Esophagus squamous epithelium (tissue), 5 donors: ENCODE measurements at regions of chr14 and their contacts with region 1.

Region 1: DNA sequence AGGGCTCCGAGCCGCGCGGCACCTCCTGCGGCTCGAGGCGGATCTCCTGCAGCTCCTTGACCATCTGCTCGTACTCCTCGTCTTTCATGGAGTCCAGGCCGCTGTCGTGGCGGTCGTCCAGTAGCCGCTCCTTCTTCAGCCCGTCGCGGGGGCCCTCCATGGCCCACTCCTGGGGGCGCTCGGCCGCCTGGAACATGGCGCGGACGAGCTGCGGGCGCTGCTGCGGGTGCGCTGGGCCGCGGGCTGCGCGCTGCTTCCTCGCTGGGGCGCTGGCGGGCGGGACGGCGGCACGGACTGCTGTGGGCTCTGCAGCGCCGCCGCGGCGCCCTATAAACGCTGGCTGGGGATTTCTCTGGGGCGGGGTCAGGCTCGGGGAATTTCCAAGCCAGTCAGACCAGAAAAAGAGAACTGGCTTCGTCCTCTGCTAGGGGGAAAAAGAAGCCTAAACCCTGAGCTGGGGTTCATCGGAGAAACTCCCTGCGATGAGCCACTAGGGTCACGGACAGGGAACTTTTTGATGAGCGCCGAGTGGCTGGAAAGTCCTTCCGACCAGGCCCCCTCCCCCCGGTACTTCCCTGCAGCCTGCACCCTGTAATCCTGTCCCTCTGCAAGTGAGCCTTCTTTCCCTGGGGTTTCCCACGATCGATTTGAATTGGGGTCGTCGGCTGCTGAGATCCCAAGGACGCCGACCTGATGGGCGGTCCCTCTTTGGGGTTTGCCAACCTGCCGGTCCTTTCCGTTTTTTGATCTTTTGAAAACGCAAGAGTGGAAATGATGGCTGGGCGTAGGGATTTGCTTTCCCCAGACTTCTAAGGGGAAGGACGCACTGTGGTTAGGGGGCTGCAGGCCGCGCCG is at the start of gene NFKBIA:
- DNase-seq: peak; percentile 63
- H3K4me3 ChIP-seq: peak within 1 kb of the TSS; percentile 66 to 99 (median 92)
- H3K27ac ChIP-seq: peak within 1 kb of the TSS; percentile 95 to 100 (median 100)
- H3K4me1 ChIP-seq: peaks cover 26 to 70% (median 27%) of the 10 kb centered on the region in 3 donors
- H3K27me3 ChIP-seq: no peaks in the 10 kb centered on the region
- CTCF ChIP-seq: peak in 5 of 6 experiments; percentile 12 to 47 (median 42)
- POLR2A ChIP-seq: peak in 3 of 4 donors; percentile 51 to 100 (median 99)
- total RNA-seq, gene NFKBIA: 139 to 441 (median 298) TPM

Region 2: GRCh38 chr14:35285168-35286002 is 119.3 kb before region 1 on chr14:
- intact Hi-C with region 1: loop called (anchors 5 kb)
- DNase-seq: no peak
- H3K4me3 ChIP-seq: no peak overlapping the region
- H3K27ac ChIP-seq: peak overlapping the region in 3 of 4 donors; percentile 7 to 50 (median 44)
- H3K4me1 ChIP-seq: peaks cover 0 to 29% (median 6%) of the 10 kb centered on the region in 3 donors
- H3K27me3 ChIP-seq: no peaks in the 10 kb centered on the region
- CTCF ChIP-seq: no peak
- POLR2A ChIP-seq: no peak

Region 3: DNA sequence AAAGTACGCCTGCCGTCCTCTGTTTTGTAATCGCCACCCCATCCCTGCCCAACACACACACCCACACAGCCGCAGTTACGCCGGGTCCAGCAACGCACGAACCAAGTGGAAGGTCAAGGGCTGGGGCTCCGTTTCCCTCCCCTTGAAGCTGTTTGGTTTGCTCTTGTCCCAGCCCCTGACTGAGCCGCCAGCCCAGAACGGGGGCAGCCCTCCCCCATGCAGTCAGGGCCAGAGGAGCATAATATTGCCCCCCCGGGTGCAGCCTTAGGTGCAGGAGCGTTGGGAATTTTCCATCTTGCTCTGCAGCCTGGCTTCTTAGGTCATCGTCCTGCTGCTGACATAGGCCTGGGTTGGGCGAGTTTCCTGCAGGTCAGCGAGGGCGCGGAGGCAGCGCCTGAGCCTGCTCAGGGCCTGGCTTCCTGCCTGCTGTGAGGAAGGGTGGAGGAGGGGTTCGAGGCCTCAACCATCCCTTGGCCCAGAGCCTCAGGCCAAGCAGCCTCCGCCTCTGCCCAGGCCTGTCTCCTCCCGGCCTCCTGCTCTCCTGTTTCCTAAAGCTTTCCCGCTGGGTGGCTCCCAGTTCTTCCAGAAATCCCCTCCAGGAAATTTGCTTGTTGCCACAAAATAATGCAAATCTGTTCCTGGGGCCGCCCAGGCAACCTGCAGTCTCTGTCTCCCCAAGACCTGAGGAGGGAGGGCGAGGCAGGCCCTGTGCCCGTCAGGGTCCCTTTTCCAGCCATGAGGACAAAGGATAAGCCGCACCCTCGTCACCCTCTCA is 68.0 kb before region 1 on chr14:
- intact Hi-C with region 1: loop called (anchors 5 kb)
- DNase-seq: peak; percentile 56
- H3K4me3 ChIP-seq: peak overlapping the region in 2 of 4 donors; percentile 6 to 26
- H3K27ac ChIP-seq: peak overlapping the region; percentile 84 to 94 (median 90)
- H3K4me1 ChIP-seq: peaks cover 91 to 100% (median 94%) of the 10 kb centered on the region in 3 donors
- H3K27me3 ChIP-seq: no peaks in the 10 kb centered on the region
- CTCF ChIP-seq: peak in 2 of 6 experiments; percentile 9
- POLR2A ChIP-seq: peak in 2 of 4 donors; percentile 2 to 37